ENCODE measurements at regions of chr12 and their contacts with region 1.

Region 1: GRCh38 chr12:12716793-12717585 is at the start of gene CDKN1B:
- DNase-seq: peak; percentile 89
- H3K4me3 ChIP-seq: peak within 1 kb of the TSS; percentile 88
- H3K27ac ChIP-seq: peak within 1 kb of the TSS; percentile 98
- H3K4me1 ChIP-seq: peaks cover 56% of the 10 kb centered on the region
- CTCF ChIP-seq: no peak
- total RNA-seq, gene CDKN1B: 59.4 and 65.7 TPM in 2 replicates

Region 2: DNA sequence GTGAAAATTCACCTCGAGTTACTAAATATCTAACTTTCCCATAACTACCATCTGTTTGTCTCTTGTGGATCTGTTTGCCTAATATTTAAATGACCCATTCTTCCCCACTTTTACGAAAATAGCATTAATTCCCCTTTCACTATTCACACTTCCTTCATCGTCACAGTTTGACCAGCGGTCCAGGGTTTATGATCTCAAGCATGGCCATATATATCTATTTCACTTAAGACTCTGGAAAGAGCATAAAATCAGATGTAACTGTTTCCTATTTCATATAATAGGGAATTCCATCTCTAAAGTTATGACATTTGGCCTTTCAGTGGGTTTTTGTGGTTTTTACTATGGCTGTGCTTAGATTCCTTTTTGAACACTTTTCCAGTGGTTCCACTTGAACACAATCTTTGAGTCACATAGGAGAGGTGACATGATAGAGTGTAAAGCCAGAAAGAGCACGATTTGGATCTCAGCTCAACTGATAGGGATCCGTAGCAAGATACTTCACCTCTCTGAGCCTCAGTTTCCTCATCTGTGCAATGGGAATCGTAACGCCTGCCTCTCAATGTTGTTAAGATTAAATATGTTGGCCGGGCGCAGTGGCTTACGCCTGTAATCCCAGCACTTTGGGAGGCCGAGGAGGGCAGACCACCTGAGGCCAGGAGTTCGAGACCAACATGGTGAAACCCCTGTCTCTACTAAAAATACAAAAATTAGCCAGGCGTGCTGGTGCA is 647.0 kb before region 1 on chr12:
- CTCF ChIA-PET with region 1: no interaction called
- POLR2A ChIA-PET with region 1: no interaction called
- intact Hi-C with region 1: no loop called
- DNase-seq: no peak
- H3K4me3 ChIP-seq: no peak overlapping the region
- H3K27ac ChIP-seq: no peak overlapping the region
- H3K4me1 ChIP-seq: no peaks in the 10 kb centered on the region
- CTCF ChIP-seq: no peak

Region 3: DNA sequence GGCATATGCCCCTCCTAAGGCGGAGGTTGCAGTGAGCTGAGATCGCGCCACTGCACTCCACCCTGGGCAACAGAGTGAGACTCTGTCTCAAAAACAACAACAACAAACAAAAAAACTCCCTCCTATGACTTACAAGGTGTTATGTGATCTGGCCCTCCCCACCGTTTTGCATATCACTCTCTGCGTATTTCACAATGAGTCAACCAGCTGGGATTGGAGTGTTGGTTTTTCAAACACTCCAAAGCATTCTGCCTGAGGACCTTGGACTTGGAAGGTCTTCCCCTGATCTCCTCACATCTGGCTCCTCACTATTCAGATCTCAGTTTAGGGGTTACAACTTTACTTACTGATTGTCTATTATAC is 381.0 kb before region 1 on chr12:
- CTCF ChIA-PET with region 1: no interaction called
- POLR2A ChIA-PET with region 1: no interaction called
- intact Hi-C with region 1: no loop called
- DNase-seq: no peak
- H3K4me3 ChIP-seq: no peak overlapping the region
- H3K27ac ChIP-seq: no peak overlapping the region
- H3K4me1 ChIP-seq: no peaks in the 10 kb centered on the region
- CTCF ChIP-seq: no peak

Region 4: DNA sequence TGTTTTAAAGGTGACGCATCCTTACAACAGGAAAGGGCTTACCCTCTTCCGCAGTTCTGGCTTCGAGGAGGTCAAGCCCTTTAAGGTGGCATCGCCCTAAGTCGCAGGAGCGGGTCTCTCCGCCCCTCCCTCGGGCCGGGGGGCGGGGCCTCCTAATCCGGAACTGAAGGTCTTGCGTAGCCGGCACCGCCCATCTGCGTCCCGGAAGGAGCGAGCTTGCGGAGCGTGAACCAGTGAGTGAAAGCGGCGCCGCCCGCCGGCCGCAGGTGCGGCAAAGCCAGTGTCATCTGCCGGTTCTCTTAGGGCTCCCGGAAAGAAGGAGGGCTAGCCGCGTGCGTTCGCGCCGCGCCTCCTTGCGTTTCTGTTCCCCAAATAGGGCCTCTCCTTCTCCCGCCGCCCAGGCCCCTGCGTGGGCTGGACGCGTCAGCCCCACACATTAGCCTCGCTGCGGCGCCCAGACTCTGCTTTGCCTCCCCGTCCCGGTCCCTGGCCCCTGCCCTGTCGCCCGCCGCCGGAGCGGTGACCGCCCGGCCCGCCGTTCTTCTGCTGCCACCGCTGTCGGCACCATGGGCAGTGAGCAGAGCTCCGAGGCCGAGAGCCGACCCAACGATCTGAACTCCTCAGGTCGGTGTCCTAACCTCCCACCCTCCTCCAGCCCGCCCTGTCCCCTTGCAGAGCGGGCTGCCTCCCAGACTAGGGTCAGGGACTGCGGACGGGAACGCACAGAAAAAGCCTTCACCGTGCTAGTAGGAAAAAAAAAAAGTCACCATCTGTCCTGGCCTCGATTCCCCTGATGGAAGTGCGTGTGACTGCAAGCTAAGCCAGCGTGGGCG is 359.9 kb before region 1 on chr12 and contains the start of gene BORCS5:
- CTCF ChIA-PET with region 1: no interaction called
- POLR2A ChIA-PET with region 1: interaction called, 24 read pairs
- intact Hi-C with region 1: loop called (anchors 2 kb)
- DNase-seq: peak; percentile 99
- H3K4me3 ChIP-seq: peak within 1 kb of the TSS; percentile 81
- H3K27ac ChIP-seq: peak within 1 kb of the TSS; percentile 82
- H3K4me1 ChIP-seq: peaks cover 18% of the 10 kb centered on the region
- CTCF ChIP-seq: peak; percentile 55
- total RNA-seq, gene BORCS5: 9.6 and 10.4 TPM in 2 replicates

Region 5: GRCh38 chr12:12562585-12563261 is 154.3 kb before region 1 on chr12 and contains the start of gene DUSP16:
- CTCF ChIA-PET with region 1: no interaction called
- POLR2A ChIA-PET with region 1: no interaction called
- intact Hi-C with region 1: loop called (anchors 5 kb)
- DNase-seq: peak; percentile 79
- H3K4me3 ChIP-seq: peak within 1 kb of the TSS; percentile 72
- H3K27ac ChIP-seq: peak within 1 kb of the TSS; percentile 59
- H3K4me1 ChIP-seq: peaks cover 26% of the 10 kb centered on the region
- CTCF ChIP-seq: peak; percentile 17; the same call in 1 of the 2 replicates
- total RNA-seq, gene DUSP16: 2.8 and 3.7 TPM in 2 replicates

Region 6: DNA sequence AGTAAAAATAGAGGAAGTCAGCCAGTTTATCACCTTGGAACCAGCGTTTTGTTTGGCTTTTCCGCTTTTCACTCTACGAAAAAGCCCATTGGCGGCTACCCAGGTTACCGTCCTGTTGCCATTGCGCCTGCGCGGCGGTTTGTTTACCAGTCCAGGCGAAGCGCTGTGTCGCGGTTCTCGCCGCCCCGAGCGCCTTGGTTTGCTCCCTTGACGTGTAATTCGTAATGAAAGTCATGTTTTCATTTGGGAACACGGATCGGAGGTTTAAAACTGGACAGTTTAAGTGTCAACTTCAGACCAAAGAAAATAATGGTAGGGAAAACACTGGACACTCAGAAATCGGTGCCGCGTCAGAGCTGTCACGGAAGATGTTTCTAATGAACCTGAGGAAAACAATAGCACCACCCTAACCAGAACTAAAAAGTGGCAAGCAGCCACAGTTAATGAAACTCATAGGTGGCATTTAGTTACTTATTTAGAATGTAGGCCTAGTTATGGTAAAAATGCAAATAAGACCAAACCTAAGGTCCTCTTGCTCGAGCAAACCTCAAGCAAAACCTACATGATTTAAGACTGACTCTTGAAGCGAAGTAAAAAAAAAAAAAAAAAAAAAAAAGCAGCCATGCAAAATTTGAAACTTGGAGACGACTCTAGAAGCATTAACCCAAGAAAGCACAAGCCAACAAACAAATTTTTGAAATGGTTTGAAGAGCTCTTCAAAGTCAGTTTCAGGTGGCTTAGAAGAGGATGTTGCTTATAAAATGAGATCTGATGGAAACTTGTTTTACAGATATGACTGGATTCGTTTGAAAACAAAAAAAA is 20.2 kb before region 1 on chr12:
- CTCF ChIA-PET with region 1: no interaction called
- POLR2A ChIA-PET with region 1: interaction called, 44 read pairs
- intact Hi-C with region 1: loop called (anchors 1 kb)
- DNase-seq: peak; percentile 97
- H3K4me3 ChIP-seq: peak overlapping the region; percentile 73
- H3K27ac ChIP-seq: peak overlapping the region; percentile 97
- H3K4me1 ChIP-seq: peaks cover 48% of the 10 kb centered on the region
- CTCF ChIP-seq: peak; percentile 27; the same call in 1 of the 2 replicates

Region 7: DNA sequence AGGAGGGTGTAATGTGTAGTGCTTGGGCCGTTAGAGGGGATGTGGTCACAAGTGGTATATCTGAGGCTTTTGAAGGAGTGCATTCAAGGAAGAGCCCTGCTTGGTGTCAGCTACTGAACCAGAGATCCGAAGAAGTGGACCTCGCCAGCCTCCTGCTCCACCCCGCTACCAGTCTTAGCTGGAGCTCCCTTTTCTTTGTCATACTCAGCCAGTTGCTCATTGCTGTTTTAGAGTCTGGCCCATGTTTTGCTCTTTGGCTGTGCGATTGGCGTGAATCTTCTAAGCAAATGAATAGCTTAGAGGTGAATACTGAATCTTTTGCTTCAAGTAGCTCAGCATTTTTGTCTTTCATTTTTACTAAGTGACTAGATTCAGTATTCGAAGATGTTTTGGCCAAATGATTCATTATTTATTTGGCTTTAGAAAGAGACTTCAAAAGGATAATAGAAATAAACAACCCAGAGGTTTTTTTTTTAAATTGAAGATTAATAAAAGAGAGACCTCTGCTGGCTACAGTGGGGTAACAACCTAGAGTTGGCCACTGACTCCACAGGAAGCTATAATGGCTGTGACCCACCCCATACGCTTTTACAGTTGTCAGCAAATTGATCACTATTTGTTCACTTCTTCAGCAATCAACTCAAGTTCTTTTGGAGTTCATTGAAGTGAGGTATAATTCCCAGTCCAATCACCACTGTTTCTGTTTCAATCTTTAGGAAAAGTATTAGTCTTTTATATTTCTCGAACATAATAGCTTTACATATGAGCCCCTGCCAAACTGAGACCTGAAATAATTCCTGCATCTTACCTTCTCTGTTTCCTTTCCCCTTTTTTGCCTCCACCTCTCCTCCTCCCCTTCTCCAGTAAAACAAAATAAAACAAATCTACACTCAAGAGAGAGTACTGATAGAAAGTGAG is 20.0 kb after region 1 on chr12:
- CTCF ChIA-PET with region 1: no interaction called
- POLR2A ChIA-PET with region 1: interaction called, 26 read pairs
- intact Hi-C with region 1: loop called (anchors 2 kb)
- DNase-seq: peak; percentile 70
- H3K4me3 ChIP-seq: peak overlapping the region; percentile 17
- H3K27ac ChIP-seq: peak overlapping the region; percentile 72
- H3K4me1 ChIP-seq: peaks cover 17% of the 10 kb centered on the region
- CTCF ChIP-seq: peak; percentile 95

Region 8: GRCh38 chr12:12786716-12787601 is 70.0 kb after region 1 on chr12:
- CTCF ChIA-PET with region 1: no interaction called
- POLR2A ChIA-PET with region 1: no interaction called
- intact Hi-C with region 1: no loop called
- DNase-seq: no peak
- H3K4me3 ChIP-seq: no peak overlapping the region
- H3K27ac ChIP-seq: no peak overlapping the region
- H3K4me1 ChIP-seq: peaks cover 7% of the 10 kb centered on the region
- CTCF ChIP-seq: no peak